ENCODE measurements at regions of chr1 and their contacts with region 1.

Region 1: DNA sequence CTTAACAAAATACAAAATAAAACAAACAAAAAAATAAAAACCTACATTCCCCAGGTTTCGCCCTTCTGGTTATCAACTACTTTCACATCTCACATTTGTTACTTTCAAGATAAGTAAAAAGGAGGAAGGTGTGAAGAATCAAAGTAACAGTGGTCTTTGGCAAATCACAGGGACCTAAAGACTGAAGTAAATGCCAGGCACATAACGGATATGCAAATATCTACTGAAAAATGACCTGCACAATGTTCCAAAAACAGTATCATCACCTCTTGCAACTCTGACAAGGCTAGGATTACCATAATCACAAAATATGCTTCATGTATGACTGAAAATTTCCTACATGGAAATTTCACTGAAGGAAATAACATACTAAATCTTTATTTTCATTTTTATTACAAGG is 29.3 kb downstream of the COP1 start:
- DNase-seq: no peak
- H3K4me3 Mint-ChIP-seq: peak overlapping the region; percentile 19
- H3K27ac Mint-ChIP-seq: peak overlapping the region; percentile 79
- H3K4me1 Mint-ChIP-seq: peaks cover 37% of the 10 kb centered on the region
- H3K27me3 Mint-ChIP-seq: no peaks in the 10 kb centered on the region

Region 2: DNA sequence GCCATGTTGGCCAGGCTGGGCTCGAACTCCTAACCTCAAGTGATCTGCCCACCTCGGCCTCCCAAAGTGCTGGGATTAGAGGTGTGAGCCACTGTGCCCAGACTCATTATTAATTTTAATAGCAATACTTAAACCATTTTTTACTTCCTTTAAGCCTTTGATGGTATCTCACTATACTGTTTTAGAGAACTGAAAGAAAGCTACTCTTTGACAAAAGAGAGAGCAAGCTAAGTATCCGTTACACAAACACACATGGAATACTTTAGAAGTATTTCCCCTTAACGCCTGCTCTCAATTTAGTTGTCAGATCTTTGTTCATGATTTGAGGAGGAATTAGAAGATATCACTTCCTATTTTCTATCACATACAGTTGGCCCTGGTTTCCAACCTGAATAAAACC is 160.0 kb before region 1 on chr1:
- intact Hi-C with region 1: no loop called
- DNase-seq: no peak
- H3K4me3 Mint-ChIP-seq: no peak overlapping the region
- H3K27ac Mint-ChIP-seq: no peak overlapping the region
- H3K4me1 Mint-ChIP-seq: no peaks in the 10 kb centered on the region
- H3K27me3 Mint-ChIP-seq: no peaks in the 10 kb centered on the region

Region 3: GRCh38 chr1:176119549-176119948 is 58.2 kb before region 1 on chr1:
- intact Hi-C with region 1: loop called (anchors 5 kb)
- DNase-seq: no peak
- H3K4me3 Mint-ChIP-seq: no peak overlapping the region
- H3K27ac Mint-ChIP-seq: no peak overlapping the region
- H3K4me1 Mint-ChIP-seq: no peaks in the 10 kb centered on the region
- H3K27me3 Mint-ChIP-seq: no peaks in the 10 kb centered on the region

Region 4: GRCh38 chr1:176159993-176160392 is 17.8 kb before region 1 on chr1:
- intact Hi-C with region 1: loop called (anchors 1 kb)
- DNase-seq: no peak
- H3K4me3 Mint-ChIP-seq: peak overlapping the region; percentile 17
- H3K27ac Mint-ChIP-seq: peak overlapping the region; percentile 85
- H3K4me1 Mint-ChIP-seq: peaks cover 26% of the 10 kb centered on the region
- H3K27me3 Mint-ChIP-seq: no peaks in the 10 kb centered on the region

Region 5: DNA sequence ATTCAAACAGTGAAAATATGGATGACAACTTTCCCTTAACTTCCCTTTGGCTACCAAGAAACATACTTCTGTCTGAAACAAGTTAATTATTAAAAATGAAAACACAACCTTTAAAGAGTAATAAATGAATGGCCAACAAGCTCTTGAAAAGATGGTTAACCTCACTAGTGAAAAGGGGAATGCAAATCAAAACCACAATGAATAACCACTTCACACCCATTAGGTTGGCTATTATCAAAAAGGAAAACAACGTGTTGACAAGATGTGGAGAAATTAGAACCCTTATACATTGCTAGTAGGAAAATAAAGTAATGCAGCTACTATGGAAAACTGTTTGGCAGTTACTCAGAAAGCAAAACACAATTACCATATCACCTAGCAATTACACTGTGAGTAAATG is 15.3 kb after region 1 on chr1:
- intact Hi-C with region 1: loop called (anchors 1 kb)
- DNase-seq: no peak
- H3K4me3 Mint-ChIP-seq: no peak overlapping the region
- H3K27ac Mint-ChIP-seq: peak overlapping the region; percentile 2
- H3K4me1 Mint-ChIP-seq: peaks cover 37% of the 10 kb centered on the region
- H3K27me3 Mint-ChIP-seq: no peaks in the 10 kb centered on the region